Activated T-helper 1 cell treated with anti-CD3 and anti-CD28 coated beads, Interleukin-12 subunit alpha, Interleukin-12 subunit beta, Interleukin-2, Interleukin-4 antibody, amounts not matched to agents 30 ng/mL and 10 ng/mL and 1 ng/mL, durations not matched to agents 14 hours and 24 hours and 36 hours (primary cell): ENCODE measurements at regions of chr12 and their contacts with region 1.

Region 1: DNA sequence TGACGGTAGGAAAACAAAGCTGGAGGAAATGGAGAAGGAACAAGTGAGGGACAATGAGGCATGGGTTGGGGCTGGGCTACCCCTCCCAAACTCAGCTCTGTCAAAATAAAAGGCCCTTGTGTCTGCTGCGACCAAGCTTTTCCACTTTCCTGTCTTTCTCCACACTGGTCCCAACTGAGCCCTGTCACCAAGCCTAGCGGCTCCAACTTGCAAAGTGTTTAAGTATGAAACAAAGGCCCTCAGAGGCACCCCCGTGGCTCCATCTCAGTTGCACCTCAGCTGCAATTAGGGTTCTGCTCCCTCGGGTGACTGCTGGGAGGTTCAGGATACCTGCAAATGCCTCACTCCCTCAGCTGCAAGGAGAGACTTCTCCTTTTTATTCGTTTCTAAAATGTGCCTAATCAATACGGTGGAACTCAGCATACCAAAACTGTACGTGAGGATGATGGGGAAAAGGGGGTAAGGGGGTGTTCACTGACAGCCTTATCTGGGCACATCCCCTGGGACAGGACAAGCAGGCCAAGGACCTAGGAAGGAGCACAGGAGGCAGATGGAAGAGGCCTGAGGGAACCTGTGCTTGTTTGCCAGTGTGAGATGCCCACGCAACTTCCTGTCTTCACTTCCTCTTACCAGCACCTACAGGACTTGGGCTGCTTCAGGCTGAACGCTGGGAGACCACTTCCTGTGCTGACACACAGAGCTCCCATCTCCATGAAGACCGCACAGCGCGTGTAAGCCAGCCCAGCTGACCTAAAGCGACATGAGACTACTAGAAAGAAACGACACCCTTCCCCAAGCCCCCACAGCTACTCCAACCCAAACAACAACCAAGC is 8.9 kb downstream of the VAMP1 start:
- DNase-seq: peak; percentile 82
- H3K4me3 Mint-ChIP-seq: peak overlapping the region; percentile 78
- H3K27ac Mint-ChIP-seq: peak overlapping the region; percentile 99
- H3K4me1 Mint-ChIP-seq: peaks cover 83% of the 10 kb centered on the region
- H3K27me3 Mint-ChIP-seq: no peaks in the 10 kb centered on the region

Region 2: DNA sequence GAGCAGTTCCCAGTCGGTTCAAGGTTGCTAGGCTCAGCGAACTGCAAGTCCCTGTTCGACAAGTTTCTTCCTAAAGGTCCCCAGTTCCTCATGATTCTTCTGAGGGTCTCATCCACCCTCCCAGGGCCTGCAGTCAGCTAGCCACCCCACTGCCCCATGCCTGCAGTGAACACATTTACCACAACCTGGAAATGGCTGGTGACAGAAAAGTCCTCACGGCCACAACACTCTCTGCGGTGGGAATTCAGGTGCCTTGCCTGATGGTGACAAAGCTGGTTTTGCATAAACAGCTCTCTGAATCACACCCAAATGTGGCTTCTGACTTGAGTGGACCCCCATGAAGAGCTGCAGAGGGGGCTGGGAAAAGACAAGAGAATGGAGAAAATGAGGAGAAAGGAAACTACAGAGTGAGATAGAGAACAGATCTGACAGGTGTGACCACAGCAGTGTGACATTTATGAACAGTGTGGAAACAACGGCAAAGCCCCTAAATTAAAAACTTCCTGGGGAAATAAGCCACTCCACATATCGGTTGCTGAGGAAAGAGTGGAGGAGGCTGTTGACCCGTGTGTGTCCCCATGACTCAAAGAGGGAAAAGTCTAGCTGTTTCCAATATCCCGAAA is 18.1 kb before region 1 on chr12:
- intact Hi-C with region 1: loop called (anchors 1 kb)
- DNase-seq: no peak
- H3K4me3 Mint-ChIP-seq: peak overlapping the region; percentile 93
- H3K27ac Mint-ChIP-seq: peak overlapping the region; percentile 97
- H3K4me1 Mint-ChIP-seq: peaks cover 82% of the 10 kb centered on the region
- H3K27me3 Mint-ChIP-seq: no peaks in the 10 kb centered on the region

Region 3: DNA sequence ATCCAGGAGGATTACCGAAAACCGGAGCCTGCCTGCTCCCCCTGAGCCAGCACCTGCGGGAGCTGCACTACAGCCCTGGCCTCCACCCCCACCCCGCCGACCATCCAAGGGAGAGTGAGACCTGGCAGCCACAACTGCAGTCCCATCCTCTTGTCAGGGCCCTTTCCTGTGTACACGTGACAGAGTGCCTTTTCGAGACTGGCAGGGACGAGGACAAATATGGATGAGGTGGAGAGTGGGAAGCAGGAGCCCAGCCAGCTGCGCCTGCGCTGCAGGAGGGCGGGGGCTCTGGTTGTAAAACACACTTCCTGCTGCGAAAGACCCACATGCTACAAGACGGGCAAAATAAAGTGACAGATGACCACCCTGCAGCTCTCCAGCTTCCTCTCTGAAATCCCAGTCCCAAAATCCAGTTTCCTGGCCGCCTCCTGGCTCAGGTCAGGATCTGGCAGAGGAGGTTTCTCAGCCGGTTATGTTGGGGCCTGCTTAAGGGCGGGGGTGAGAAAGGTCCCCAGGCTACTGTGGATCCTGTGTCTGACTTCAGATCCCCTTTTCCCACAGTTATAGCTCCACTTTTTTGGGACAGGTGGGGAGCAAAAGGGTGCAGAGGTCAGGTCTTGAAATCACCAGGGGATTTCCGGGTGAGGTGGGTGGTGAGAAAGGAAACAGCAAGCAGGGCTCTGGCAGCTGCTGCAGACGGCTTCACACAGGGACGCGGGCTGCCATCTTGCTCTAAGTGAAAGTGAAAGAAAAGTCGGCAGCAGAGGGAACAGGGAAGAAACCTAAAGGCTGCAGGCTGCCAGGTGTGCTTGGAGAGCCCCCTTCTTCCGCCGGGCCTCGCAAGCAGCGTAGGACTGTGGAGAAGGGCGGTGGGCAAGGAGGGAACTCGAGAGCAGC is 10.0 kb before region 1 on chr12 and contains the start of gene TAPBPL:
- intact Hi-C with region 1: loop called (anchors 1 kb)
- DNase-seq: peak; percentile 79
- H3K4me3 Mint-ChIP-seq: peak within 1 kb of the TSS; percentile 98
- H3K27ac Mint-ChIP-seq: peak within 1 kb of the TSS; percentile 91
- H3K4me1 Mint-ChIP-seq: peaks cover 72% of the 10 kb centered on the region
- H3K27me3 Mint-ChIP-seq: no peaks in the 10 kb centered on the region
- total RNA-seq, gene TAPBPL: 34.1 and 34.3 TPM in 2 replicates

Region 4: GRCh38 chr12:6606293-6607131 is 144.9 kb after region 1 on chr12:
- intact Hi-C with region 1: no loop called
- DNase-seq: peak; percentile 49
- H3K4me3 Mint-ChIP-seq: no peak overlapping the region
- H3K27ac Mint-ChIP-seq: peak overlapping the region; percentile 93
- H3K4me1 Mint-ChIP-seq: peaks cover 49% of the 10 kb centered on the region
- H3K27me3 Mint-ChIP-seq: no peaks in the 10 kb centered on the region

Region 5: GRCh38 chr12:6632026-6632983 is 170.7 kb after region 1 on chr12:
- intact Hi-C with region 1: no loop called
- DNase-seq: peak; percentile 46
- H3K4me3 Mint-ChIP-seq: peak overlapping the region; percentile 67
- H3K27ac Mint-ChIP-seq: peak overlapping the region; percentile 96
- H3K4me1 Mint-ChIP-seq: peaks cover 60% of the 10 kb centered on the region
- H3K27me3 Mint-ChIP-seq: no peaks in the 10 kb centered on the region

Region 6: DNA sequence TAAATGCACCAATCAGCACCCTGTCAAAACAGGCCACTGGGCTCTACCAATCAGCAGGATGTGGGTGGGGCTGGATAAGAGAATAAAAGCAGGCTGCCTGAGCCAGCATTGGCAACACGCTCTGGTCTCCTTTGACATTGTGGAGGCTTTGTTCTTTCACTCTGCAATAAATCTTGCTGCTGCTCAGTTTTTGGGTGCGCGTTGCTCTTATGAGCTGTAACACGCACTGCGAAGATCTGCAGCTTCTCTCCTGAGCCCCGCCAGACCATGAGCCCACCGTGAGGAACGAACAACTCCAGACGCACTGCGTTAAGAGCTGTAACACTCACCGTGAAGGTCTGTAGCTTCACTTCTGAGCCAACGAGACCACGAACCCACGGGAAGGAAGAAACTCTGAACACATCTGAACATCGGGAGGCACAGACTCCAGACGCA is 247.4 kb after region 1 on chr12:
- intact Hi-C with region 1: no loop called
- DNase-seq: no peak
- H3K4me3 Mint-ChIP-seq: no peak overlapping the region
- H3K27ac Mint-ChIP-seq: no peak overlapping the region
- H3K4me1 Mint-ChIP-seq: peaks cover 6% of the 10 kb centered on the region
- H3K27me3 Mint-ChIP-seq: peaks cover 17% of the 10 kb centered on the region